Vagina (tissue), 2 donors: ENCODE measurements at regions of chr1 and their contacts with region 1.

Region 1: DNA sequence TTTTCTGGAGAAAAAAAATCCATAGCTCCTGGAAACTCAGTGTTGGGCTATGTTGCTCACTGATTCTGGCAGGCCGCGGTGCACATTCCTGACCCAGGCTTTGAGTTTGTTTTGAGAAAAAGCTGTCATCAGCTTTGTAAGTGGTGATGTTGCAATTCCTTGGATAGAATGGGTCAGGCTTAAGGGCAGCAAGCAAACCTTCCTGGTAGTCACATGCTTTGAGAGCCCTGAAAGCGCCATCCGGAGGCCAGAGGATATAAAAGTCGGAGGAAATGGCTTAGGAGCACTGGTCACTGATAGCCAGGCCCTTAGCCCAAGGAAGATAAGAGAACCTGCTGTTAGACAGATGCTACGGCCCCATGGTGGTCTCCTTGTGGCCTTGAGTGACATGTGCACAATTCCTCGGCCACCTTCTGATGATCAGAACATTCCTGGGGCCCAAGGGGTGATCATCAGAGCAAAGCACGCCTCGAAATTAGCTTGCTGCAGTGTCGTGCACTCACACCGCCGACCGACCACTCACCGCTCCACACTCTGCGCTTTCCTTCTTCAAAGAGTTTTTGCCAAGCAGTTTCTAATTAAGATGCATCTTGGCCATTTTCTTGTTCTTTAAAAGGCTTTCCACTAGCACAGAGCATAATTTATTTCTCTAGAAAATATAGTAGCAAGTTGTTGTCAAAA is 78.6 kb downstream of the MAN1C1 start:
- DNase-seq: peak in 1 of 2 donors; percentile 95
- H3K4me3 ChIP-seq: no peak overlapping the region
- H3K27ac ChIP-seq: peak overlapping the region; percentile 85
- H3K4me1 ChIP-seq: peaks cover 78% of the 10 kb centered on the region
- H3K27me3 ChIP-seq: no peaks in the 10 kb centered on the region
- CTCF ChIP-seq: no peak
- POLR2A ChIP-seq: no peak

Region 2: GRCh38 chr1:24619376-24619775 is 1075.9 kb before region 1 on chr1:
- intact Hi-C with region 1: no loop called
- DNase-seq: peak in 1 of 2 donors; percentile 69
- H3K4me3 ChIP-seq: no peak overlapping the region
- H3K27ac ChIP-seq: no peak overlapping the region
- H3K4me1 ChIP-seq: no peaks in the 10 kb centered on the region
- H3K27me3 ChIP-seq: no peaks in the 10 kb centered on the region
- CTCF ChIP-seq: no peak
- POLR2A ChIP-seq: no peak

Region 3: GRCh38 chr1:25616095-25616986 is 78.9 kb before region 1 on chr1 and contains the start of gene MAN1C1:
- intact Hi-C with region 1: loop called (anchors 5 kb)
- DNase-seq: no peak
- H3K4me3 ChIP-seq: peak within 1 kb of the TSS; percentile 65 to 77
- H3K27ac ChIP-seq: peak within 1 kb of the TSS; percentile 89
- H3K4me1 ChIP-seq: peaks cover 46% of the 10 kb centered on the region
- H3K27me3 ChIP-seq: no peaks in the 10 kb centered on the region
- CTCF ChIP-seq: peak in 1 of 3 experiments; percentile 31
- POLR2A ChIP-seq: peak in 1 of 2 donors; percentile 71
- total RNA-seq, gene MAN1C1: 31.4 TPM

Region 4: GRCh38 chr1:25743826-25744581 is 48.8 kb after region 1 on chr1:
- intact Hi-C with region 1: loop called (anchors 2 kb)
- DNase-seq: no peak
- H3K4me3 ChIP-seq: peak overlapping the region in 1 of 2 donors; percentile 18
- H3K27ac ChIP-seq: peak overlapping the region; percentile 90
- H3K4me1 ChIP-seq: peaks cover 66% of the 10 kb centered on the region
- H3K27me3 ChIP-seq: no peaks in the 10 kb centered on the region
- CTCF ChIP-seq: peak in 2 of 3 experiments; percentile 39 to 43
- POLR2A ChIP-seq: no peak

Region 5: GRCh38 chr1:25796811-25797458 is 101.7 kb after region 1 on chr1:
- intact Hi-C with region 1: loop called (anchors 10 kb)
- DNase-seq: no peak
- H3K4me3 ChIP-seq: no peak overlapping the region
- H3K27ac ChIP-seq: peak overlapping the region; percentile 25
- H3K4me1 ChIP-seq: peaks cover 43% of the 10 kb centered on the region
- H3K27me3 ChIP-seq: no peaks in the 10 kb centered on the region
- CTCF ChIP-seq: peak; percentile 56 to 80 (median 62)
- POLR2A ChIP-seq: no peak